CD8-positive, alpha-beta T cell (primary cell): ENCODE measurements at regions of chr10 and their contacts with region 1.

Region 1: DNA sequence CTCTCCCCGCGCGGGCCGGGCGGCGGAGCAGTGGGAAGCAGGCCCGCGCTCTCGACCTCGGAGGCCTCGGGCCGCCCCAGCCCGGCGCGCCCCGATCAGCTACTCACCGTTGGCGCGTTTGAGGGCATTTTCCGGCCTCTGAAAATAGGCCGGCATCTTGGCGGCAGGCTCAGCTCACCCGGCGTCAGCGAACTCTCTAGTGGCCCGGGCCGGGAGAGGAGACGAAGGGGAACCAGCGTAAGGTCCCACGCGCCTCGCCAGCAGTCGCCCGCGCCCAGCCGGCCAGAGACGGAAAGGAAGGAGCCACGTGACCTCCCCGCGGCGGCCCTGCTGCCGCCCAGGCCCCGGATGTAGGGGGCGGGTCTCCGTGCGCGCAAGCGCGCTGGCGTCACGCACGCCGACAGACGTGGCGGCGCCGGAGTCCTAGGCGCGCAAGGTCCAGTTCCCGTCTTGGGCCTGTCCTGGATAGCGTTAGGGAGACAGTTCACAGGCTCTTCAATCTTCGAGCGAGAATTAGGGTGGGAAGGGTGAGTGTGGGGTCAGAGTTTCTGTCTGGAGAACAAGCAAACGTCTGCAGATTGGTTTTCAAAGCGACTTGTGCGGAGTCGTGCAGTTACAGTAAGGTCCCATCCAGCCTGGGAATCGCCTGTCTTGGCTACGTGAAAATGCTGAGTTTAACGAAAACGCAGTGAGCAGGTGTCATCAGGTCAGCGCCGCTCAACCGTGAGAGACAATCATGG is at the start of gene EIF3A:
- DNase-seq: peak; percentile 85 to 95 (median 91)
- ATAC-seq: peak; percentile 72
- H3K4me3 ChIP-seq: peak within 1 kb of the TSS; percentile 64 to 99
- H3K4me3 Mint-ChIP-seq: peak within 1 kb of the TSS; percentile 94
- H3K27ac ChIP-seq: peak within 1 kb of the TSS; percentile 82 to 96
- H3K27ac Mint-ChIP-seq: peak within 1 kb of the TSS; percentile 97
- H3K4me1 ChIP-seq: peaks cover 24% of the 10 kb centered on the region
- H3K4me1 Mint-ChIP-seq: peaks cover 45% of the 10 kb centered on the region
- H3K27me3 ChIP-seq: no peaks in the 10 kb centered on the region
- H3K27me3 Mint-ChIP-seq: no peaks in the 10 kb centered on the region
- CTCF ChIP-seq: no peak
- total RNA-seq, gene EIF3A: 121 to 128 TPM

Region 2: DNA sequence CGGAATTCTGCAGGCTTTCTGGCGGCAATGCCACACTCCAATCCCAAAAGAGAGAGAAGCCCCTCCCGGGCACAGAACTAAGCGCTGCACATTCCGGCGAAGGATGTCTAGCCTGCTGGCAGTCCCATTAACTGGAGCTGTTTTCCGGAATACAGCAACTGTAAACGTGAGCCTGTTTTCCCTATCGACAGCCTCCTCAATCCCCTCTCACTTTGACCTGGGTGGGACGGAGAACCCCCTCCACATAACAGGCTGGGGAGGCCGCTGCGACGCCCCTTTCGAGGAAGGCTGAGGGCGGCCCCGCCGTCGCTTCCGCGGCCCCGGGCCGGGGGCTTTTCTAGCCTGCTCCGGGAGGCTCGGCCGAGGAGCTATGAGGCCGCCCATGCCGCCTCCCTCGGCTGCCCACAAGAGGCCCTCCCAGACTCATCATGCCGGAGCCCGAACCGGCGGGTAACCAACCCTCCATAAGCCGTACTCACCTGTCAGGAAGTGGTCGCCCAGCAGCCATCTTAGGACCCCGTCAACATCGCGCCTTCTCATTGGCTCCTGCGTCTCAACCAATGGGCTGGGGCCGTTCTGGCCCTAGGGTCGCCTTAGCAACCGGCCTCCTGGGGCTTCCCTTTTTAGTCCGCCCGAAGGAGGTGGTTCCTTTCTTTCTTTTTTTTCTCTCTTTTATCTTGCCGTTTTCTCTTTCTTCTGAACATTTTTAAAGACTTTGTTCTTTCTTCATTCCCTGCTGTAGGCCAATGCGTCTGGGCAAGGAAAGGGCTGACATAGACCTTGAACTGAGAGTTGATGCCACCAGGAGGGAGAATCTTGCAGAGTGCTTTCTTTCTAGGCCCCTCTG is 738.7 kb before region 1 on chr10 and contains the start of gene FAM204A:
- CTCF ChIA-PET with region 1: no interaction called
- POLR2A ChIA-PET with region 1: no interaction called
- intact Hi-C with region 1: loop called in 1 of 2 experiments (anchors 5 kb)
- DNase-seq: peak; percentile 95 to 99 (median 97)
- ATAC-seq: peak; percentile 94
- H3K4me3 ChIP-seq: peak within 1 kb of the TSS; percentile 81 to 86
- H3K4me3 Mint-ChIP-seq: peak within 1 kb of the TSS; percentile 96
- H3K27ac ChIP-seq: peak within 1 kb of the TSS; percentile 51 to 72
- H3K27ac Mint-ChIP-seq: peak within 1 kb of the TSS; percentile 95
- H3K4me1 ChIP-seq: peaks cover 22% of the 10 kb centered on the region
- H3K4me1 Mint-ChIP-seq: peaks cover 53% of the 10 kb centered on the region
- H3K27me3 ChIP-seq: no peaks in the 10 kb centered on the region
- H3K27me3 Mint-ChIP-seq: no peaks in the 10 kb centered on the region
- CTCF ChIP-seq: no peak
- total RNA-seq, gene FAM204A: 44.8 to 51.7 TPM

Region 3: GRCh38 chr10:119090968-119091367 is 10.3 kb after region 1 on chr10:
- CTCF ChIA-PET with region 1: interaction called, 3 read pairs
- POLR2A ChIA-PET with region 1: interaction called, 9 read pairs
- intact Hi-C with region 1: loop called in 1 of 2 experiments (anchors 1 kb)
- DNase-seq: peak; percentile 12 to 88 (median 47)
- ATAC-seq: peak; percentile 81
- H3K4me3 ChIP-seq: no peak overlapping the region
- H3K4me3 Mint-ChIP-seq: peak overlapping the region; percentile 54
- H3K27ac ChIP-seq: peak overlapping the region; percentile 51 to 55
- H3K27ac Mint-ChIP-seq: peak overlapping the region; percentile 95
- H3K4me1 ChIP-seq: peaks cover 18% of the 10 kb centered on the region
- H3K4me1 Mint-ChIP-seq: peaks cover 31% of the 10 kb centered on the region
- H3K27me3 ChIP-seq: no peaks in the 10 kb centered on the region
- H3K27me3 Mint-ChIP-seq: no peaks in the 10 kb centered on the region
- CTCF ChIP-seq: no peak

Region 4: DNA sequence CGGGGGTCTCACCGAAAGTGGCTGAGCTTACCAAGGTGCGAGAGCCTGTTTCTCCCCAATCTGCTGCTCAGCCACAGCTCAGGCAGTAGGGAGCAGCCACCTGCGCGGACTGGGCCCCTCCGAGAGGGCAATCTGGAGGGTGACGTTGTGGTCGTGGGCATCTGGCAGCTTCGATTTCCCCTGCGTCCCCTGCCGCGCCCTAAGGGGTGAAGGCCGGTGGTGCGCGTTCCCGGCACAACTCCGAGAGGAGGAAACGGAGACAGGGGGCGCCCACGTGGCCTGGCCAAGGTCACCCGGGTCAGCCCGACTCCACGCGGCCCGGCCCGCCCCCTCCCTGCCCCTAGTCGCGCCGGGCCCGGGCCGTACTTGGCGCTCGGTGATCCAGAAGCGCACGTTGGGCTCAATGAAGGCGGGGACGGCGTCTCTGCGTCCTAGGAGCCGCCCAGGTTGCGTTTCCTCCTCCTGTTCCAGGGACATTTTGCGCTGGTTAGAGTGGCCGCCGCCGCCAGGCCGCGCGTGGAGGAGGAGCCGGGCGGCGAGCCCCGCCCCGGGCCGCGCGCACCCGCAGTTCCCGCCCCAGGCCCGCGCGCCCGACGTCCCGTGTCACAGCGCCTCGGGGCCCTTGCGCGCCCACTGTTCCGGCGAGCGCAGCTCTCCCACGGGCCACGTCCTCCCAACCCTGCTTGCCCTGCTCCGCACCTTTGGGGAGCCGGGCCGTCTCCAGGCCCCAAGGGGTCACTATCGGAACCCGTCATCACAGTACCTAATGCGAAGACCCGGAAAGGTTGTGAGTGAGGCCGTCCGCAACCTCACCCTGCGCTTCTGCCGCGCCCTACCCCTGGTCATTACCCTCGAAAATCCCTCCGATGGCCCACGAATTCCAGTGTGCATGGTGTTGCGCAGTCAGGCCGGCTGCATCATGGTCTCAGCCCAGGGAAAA is 84.8 kb after region 1 on chr10 and contains the start of gene SFXN4:
- CTCF ChIA-PET with region 1: no interaction called
- POLR2A ChIA-PET with region 1: no interaction called
- intact Hi-C with region 1: loop called (anchors 1 to 5 kb)
- DNase-seq: peak; percentile 59 to 89 (median 77)
- ATAC-seq: peak; percentile 93
- H3K4me3 ChIP-seq: peak within 1 kb of the TSS; percentile 49 to 80
- H3K4me3 Mint-ChIP-seq: peak within 1 kb of the TSS; percentile 95
- H3K27ac ChIP-seq: peak within 1 kb of the TSS; percentile 61 to 71
- H3K27ac Mint-ChIP-seq: peak within 1 kb of the TSS; percentile 96
- H3K4me1 ChIP-seq: peaks cover 18% of the 10 kb centered on the region
- H3K4me1 Mint-ChIP-seq: peaks cover 34% of the 10 kb centered on the region
- H3K27me3 ChIP-seq: no peaks in the 10 kb centered on the region
- H3K27me3 Mint-ChIP-seq: no peaks in the 10 kb centered on the region
- CTCF ChIP-seq: no peak
- total RNA-seq, gene SFXN4: 10.5 to 10.8 TPM

Region 5: GRCh38 chr10:119650692-119651513 is 570.2 kb after region 1 on chr10 and contains the start of gene BAG3:
- CTCF ChIA-PET with region 1: no interaction called
- POLR2A ChIA-PET with region 1: no interaction called
- intact Hi-C with region 1: loop called in 1 of 2 experiments (anchors 5 kb)
- DNase-seq: peak; percentile 57 to 88 (median 76)
- ATAC-seq: peak; percentile 76
- H3K4me3 ChIP-seq: peak within 1 kb of the TSS; percentile 94 to 95
- H3K4me3 Mint-ChIP-seq: peak within 1 kb of the TSS; percentile 98
- H3K27ac ChIP-seq: peak within 1 kb of the TSS; percentile 78 to 88
- H3K27ac Mint-ChIP-seq: peak within 1 kb of the TSS; percentile 95
- H3K4me1 ChIP-seq: peaks cover 36% of the 10 kb centered on the region
- H3K4me1 Mint-ChIP-seq: peaks cover 44% of the 10 kb centered on the region
- H3K27me3 ChIP-seq: no peaks in the 10 kb centered on the region
- H3K27me3 Mint-ChIP-seq: no peaks in the 10 kb centered on the region
- CTCF ChIP-seq: no peak
- total RNA-seq, gene BAG3: 20.6 to 21.8 TPM

Region 6: DNA sequence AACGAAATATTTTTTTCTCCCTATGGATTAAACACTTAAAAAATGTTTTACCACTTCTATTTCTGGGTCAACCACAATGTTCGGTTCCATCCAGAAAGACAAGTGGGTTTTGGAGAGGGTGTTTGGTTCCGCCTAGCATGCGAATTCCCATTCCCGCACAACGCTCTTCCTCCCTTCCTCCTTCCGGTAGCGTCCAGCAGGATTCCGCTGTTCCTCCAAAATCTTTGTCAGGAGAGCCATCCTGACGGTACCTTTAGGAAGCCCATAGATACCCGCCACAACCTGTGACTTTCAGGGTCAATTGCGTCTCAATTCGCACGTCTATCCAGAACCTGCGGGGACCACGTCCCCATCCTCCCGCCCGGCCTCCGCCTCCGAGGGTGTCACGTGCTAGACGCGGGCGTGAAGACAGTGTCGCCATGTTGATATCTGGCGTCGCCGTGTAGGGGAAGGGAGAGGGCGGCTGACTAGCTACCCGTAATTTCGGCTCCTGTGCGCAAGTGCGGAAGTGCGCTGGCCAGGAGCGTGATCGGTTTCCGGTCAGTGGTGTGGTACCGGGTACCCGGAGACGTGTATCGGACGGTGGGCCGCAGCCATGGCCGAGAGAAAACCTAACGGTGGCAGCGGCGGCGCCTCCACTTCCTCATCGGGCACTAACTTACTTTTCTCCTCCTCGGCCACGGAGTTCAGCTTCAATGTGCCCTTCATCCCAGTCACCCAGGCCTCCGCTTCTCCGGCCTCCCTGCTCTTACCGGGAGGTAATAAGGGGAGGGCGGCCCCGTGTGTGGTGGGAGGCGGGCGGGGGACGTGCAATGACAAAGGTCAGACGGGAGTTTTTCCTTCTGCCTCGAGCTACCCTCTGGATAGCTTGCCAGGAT is 811.7 kb after region 1 on chr10 and contains the start of gene SEC23IP:
- CTCF ChIA-PET with region 1: no interaction called
- POLR2A ChIA-PET with region 1: no interaction called
- intact Hi-C with region 1: loop called in 1 of 2 experiments (anchors 5 kb)
- DNase-seq: peak; percentile 78 to 95 (median 89)
- ATAC-seq: peak; percentile 98
- H3K4me3 ChIP-seq: peak within 1 kb of the TSS; percentile 97 to 98
- H3K4me3 Mint-ChIP-seq: peak within 1 kb of the TSS; percentile 98
- H3K27ac ChIP-seq: peak within 1 kb of the TSS; percentile 84 to 96
- H3K27ac Mint-ChIP-seq: peak within 1 kb of the TSS; percentile 99
- H3K4me1 ChIP-seq: peaks cover 10% of the 10 kb centered on the region
- H3K4me1 Mint-ChIP-seq: peaks cover 46% of the 10 kb centered on the region
- H3K27me3 ChIP-seq: no peaks in the 10 kb centered on the region
- H3K27me3 Mint-ChIP-seq: no peaks in the 10 kb centered on the region
- CTCF ChIP-seq: no peak
- total RNA-seq, gene SEC23IP: 16.2 to 19.8 TPM